Activated naive CD4-positive, alpha-beta T cell treated with anti-CD3 and anti-CD28 coated beads for 36 hours (primary cell): ENCODE measurements at regions of chr11 and their contacts with region 1.

Region 1: GRCh38 chr11:12411806-12412727 is 34.7 kb downstream of the PARVA start:
- DNase-seq: peak; percentile 55
- H3K4me3 Mint-ChIP-seq: no peak overlapping the region
- H3K27ac Mint-ChIP-seq: no peak overlapping the region
- H3K4me1 Mint-ChIP-seq: no peaks in the 10 kb centered on the region
- H3K27me3 Mint-ChIP-seq: no peaks in the 10 kb centered on the region

Region 2: GRCh38 chr11:12361682-12362081 is 50.4 kb before region 1 on chr11:
- CTCF ChIA-PET with region 1: no interaction called
- intact Hi-C with region 1: no loop called
- DNase-seq: no peak
- H3K4me3 Mint-ChIP-seq: no peak overlapping the region
- H3K27ac Mint-ChIP-seq: no peak overlapping the region
- H3K4me1 Mint-ChIP-seq: peaks cover 66% of the 10 kb centered on the region
- H3K27me3 Mint-ChIP-seq: no peaks in the 10 kb centered on the region

Region 3: DNA sequence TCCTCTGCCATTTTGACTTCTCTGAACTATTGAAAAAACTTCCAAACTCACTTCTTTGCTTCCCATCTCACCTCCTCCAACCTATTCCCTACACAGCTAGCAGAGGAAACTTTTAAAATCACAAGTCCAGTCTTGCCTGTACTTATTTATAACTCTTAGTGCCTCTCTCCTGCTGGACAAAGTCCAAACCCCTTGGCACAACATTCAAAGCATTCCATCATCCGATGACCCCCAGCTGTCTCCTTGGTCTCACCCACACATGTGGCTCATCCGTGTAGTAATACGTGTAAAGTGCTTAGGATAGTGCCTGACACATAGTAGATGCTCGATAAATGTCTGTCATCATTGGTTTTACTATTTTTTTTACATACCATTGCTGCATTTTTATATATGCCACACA is 66.7 kb after region 1 on chr11:
- CTCF ChIA-PET with region 1: no interaction called
- intact Hi-C with region 1: loop called (anchors 10 kb)
- DNase-seq: no peak
- H3K4me3 Mint-ChIP-seq: no peak overlapping the region
- H3K27ac Mint-ChIP-seq: no peak overlapping the region
- H3K4me1 Mint-ChIP-seq: no peaks in the 10 kb centered on the region
- H3K27me3 Mint-ChIP-seq: no peaks in the 10 kb centered on the region

Region 4: GRCh38 chr11:12813371-12814225 is 401.5 kb after region 1 on chr11:
- CTCF ChIA-PET with region 1: no interaction called
- intact Hi-C with region 1: loop called (anchors 10 kb)
- DNase-seq: no peak
- H3K4me3 Mint-ChIP-seq: no peak overlapping the region
- H3K27ac Mint-ChIP-seq: no peak overlapping the region
- H3K4me1 Mint-ChIP-seq: peaks cover 4% of the 10 kb centered on the region
- H3K27me3 Mint-ChIP-seq: peaks cover 50% of the 10 kb centered on the region